Sigmoid colon (tissue), 7 donors: ENCODE measurements at regions of chr19 and their contacts with region 1.

Region 1: GRCh38 chr19:6862673-6863078 is 24.7 kb upstream of the ADGRE1 start:
- DNase-seq: peak; percentile 84
- H3K4me3 ChIP-seq: peak overlapping the region in 3 of 4 donors; percentile 13 to 42 (median 37)
- H3K27ac ChIP-seq: peak overlapping the region in 1 of 4 donors; percentile 47
- H3K4me1 ChIP-seq: peaks cover 0 to 9% (median 7%) of the 10 kb centered on the region in 4 donors
- H3K27me3 ChIP-seq: peaks cover 0 to 5% (median 0%) of the 10 kb centered on the region in 3 donors
- CTCF ChIP-seq: peak; percentile 52 to 89 (median 87)
- EP300 ChIP-seq: no peak
- POLR2A ChIP-seq: no peak

Region 2: GRCh38 chr19:6516659-6517291 is 345.9 kb before region 1 on chr19:
- intact Hi-C with region 1: loop called (anchors 2 kb)
- DNase-seq: peak; percentile 92
- H3K4me3 ChIP-seq: peak overlapping the region; percentile 44 to 63 (median 62)
- H3K27ac ChIP-seq: peak overlapping the region; percentile 71 to 85 (median 78)
- H3K4me1 ChIP-seq: peaks cover 0 to 14% (median 10%) of the 10 kb centered on the region in 4 donors
- H3K27me3 ChIP-seq: no peaks in the 10 kb centered on the region
- CTCF ChIP-seq: peak; percentile 89 to 96 (median 92)
- EP300 ChIP-seq: no peak
- POLR2A ChIP-seq: no peak

Region 3: DNA sequence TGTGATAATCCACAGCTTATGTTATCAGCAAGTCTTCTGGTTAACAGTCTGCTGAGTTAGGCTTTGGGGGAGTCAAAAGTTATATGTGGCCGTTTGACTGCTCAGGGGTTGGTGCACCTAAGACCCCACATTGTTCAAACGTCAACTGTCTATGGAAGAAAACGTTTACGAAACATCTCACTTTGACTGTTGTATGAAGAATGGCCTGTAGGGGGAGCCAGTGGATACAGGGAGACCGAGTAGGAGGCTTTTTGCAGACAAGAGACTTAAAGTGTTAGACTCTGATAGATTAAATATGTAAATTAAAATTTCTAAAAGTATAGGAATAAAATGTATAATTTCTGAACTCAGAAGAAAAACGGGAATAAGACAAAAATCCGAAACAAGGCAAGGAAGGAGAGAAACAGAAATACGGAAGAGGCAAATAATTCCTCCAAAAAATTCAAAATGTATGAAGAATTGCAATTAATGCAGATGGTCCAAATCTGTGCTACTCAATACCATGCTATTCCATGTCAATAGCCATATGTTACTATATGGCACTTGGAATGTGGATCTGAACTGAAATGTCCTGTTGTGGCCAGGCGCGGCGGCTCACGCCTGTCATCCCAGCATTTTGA is 230.6 kb before region 1 on chr19:
- intact Hi-C with region 1: loop called (anchors 1 kb)
- DNase-seq: peak; percentile 82
- H3K4me3 ChIP-seq: no peak overlapping the region
- H3K27ac ChIP-seq: no peak overlapping the region
- H3K4me1 ChIP-seq: no peaks in the 10 kb centered on the region
- H3K27me3 ChIP-seq: peaks cover 0 to 7% (median 0%) of the 10 kb centered on the region in 3 donors
- CTCF ChIP-seq: peak; percentile 58 to 87 (median 74)
- EP300 ChIP-seq: no peak
- POLR2A ChIP-seq: no peak

Region 4: DNA sequence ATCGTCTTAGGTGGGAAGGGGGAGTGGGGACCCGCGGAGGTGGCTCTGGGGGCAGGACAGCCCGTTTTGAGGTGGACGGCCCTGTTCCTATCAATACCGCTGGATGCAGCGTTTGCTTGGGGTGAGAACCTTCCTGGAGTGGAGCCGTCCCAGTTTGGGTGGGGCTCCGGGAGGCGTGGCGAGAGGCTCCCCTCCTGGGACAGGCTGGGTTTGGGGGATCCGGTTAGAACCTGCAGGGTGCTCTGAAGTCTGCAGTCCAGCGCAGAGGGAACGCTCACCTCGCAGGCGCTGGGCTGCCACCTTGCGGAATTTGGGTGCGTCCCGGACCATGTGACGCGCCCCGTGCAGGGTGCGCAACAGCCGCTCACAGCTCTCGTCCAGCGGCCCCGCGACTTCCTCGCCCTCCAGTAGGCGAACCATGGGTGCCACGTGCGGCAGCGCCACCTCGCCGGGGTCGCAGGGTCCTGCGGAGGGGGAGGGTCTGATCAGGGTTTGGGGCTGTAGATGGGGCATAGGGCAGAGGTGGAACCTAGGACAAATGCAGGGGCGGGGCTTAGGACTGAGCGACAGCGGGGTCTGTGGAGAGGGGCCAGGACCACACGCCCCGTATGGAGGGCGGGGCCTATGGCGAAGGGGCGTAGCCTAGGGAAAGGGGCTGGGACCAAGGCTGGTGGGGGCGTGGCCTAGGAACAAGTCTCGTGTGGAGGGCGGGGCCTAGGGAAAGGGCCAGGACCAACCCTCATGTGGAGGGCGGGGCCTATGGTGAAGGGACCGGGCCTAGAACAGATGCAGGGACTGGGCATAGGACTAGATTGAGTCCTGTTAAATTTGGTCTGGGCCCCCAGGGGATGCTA is 109.3 kb before region 1 on chr19:
- intact Hi-C with region 1: loop called (anchors 5 kb)
- DNase-seq: peak; percentile 92
- H3K4me3 ChIP-seq: peak overlapping the region; percentile 9 to 49 (median 40)
- H3K27ac ChIP-seq: peak overlapping the region; percentile 67 to 77 (median 71)
- H3K4me1 ChIP-seq: peaks cover 0 to 16% (median 14%) of the 10 kb centered on the region in 4 donors
- H3K27me3 ChIP-seq: no peaks in the 10 kb centered on the region
- CTCF ChIP-seq: peak; percentile 18 to 48 (median 34)
- EP300 ChIP-seq: no peak
- POLR2A ChIP-seq: peak in 1 of 2 donors; percentile 21

Region 5: DNA sequence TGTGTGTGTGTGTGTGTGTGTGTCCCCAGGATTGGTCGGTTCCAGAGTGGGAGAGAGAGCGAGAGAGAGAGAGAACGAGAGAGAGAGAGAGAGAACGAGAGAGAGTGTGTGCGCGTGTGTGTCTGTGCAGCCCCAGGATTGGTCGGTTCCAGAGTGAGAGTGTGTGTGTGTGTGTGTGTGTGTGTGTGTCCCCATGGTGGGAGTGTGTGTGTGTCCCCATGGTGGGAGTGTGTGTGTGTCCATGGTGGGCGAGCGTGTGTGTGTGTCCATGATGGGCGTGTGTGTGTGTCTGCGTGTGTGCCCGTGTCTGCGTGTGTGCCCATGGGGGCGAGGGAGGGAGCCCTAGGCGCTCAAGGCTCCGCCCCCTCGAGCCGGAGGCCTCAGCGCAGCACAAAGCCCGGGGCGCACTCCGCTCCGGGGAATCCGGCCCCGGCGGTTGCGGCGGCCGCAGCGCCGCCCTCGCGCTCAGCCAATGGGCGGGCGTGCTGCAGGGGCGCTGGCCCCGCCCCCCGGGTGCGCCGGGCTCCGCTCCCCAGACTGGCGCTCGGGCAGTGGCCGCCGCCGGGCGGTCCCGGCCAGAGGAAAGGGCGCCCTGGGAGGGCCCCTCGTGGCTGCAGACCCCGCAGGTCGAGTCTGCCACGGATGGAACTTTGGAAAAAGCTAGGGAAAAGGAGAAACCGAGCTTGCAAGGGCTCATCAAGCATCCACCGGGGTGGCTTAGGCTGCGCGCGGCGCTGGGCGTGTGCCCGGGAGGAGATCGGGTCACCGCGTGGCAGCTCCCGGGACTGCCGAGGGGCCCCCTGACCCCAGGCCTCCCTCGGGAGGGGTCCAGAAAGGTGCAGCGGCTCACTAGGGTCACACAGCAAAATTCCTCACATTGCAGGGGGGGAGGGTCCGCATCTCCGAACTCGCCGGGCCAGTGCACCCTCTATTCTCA is 335.4 kb after region 1 on chr19:
- intact Hi-C with region 1: no loop called
- DNase-seq: peak; percentile 97
- H3K4me3 ChIP-seq: peak overlapping the region; percentile 52 to 75 (median 66)
- H3K27ac ChIP-seq: peak overlapping the region; percentile 85 to 92 (median 88)
- H3K4me1 ChIP-seq: peaks cover 0 to 30% (median 22%) of the 10 kb centered on the region in 4 donors
- H3K27me3 ChIP-seq: no peaks in the 10 kb centered on the region
- CTCF ChIP-seq: peak in 3 of 4 experiments; percentile 26 to 58 (median 30)
- EP300 ChIP-seq: no peak
- POLR2A ChIP-seq: peak; percentile 14 to 41